ENCODE measurements at regions of chr7 and their contacts with region 1.

Region 1: DNA sequence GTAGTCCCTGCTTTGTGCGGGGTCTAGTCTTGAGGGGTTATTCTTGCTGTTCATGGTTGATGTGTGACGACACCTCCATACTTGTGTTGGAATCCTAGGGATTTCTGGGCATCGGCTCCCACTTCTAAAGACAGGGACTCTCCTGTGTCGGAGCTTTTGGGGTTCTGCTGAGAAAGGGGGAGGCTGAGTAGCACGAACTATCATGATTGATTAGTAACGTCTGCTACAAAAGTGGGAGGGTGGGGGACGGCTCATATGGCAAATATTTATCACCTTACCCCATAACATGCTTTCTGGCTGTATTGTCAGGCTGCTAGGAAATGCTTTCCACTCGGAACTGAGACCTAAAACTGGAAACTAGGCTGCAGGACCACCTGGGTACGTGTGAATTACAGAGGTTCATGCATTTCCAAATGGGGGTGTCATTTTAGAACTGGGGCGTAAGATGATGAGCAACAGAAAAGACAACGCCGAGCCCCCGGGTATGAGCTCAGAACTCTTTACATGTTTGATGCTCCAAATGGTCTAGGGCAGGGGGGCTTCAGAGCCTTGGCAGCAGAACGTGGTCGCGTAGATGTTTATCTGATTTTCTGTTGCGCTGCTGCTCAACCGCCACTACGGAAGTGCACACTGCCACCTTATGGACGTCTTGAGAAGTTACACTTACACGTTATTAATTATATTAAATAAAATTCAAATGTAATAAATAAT is 15.1 kb upstream of the NME8 start:
- DNase-seq: peak; percentile 80
- H3K4me3 ChIP-seq: peak overlapping the region in 6 of 8 donors; percentile 18 to 65 (median 28)
- H3K27ac ChIP-seq: peak overlapping the region in 1 of 8 donors; percentile 38
- H3K4me1 ChIP-seq: peaks cover 0 to 28% (median 21%) of the 10 kb centered on the region in 6 donors
- H3K27me3 ChIP-seq: no peaks in the 10 kb centered on the region
- CTCF ChIP-seq: peak; percentile 9 to 72 (median 57)
- POLR2A ChIP-seq: no peak

Region 2: GRCh38 chr7:37208528-37208927 is 624.7 kb before region 1 on chr7:
- intact Hi-C with region 1: loop called (anchors 2 kb)
- DNase-seq: no peak
- H3K4me3 ChIP-seq: no peak overlapping the region
- H3K27ac ChIP-seq: peak overlapping the region in 7 of 8 donors; percentile 2 to 67 (median 56)
- H3K4me1 ChIP-seq: peaks cover 6 to 50% (median 31%) of the 10 kb centered on the region in 6 donors
- H3K27me3 ChIP-seq: no peaks in the 10 kb centered on the region
- CTCF ChIP-seq: peak in 5 of 11 experiments; percentile 43 to 68 (median 50)
- POLR2A ChIP-seq: no peak

Region 3: GRCh38 chr7:37633048-37633447 is 200.2 kb before region 1 on chr7:
- intact Hi-C with region 1: loop called (anchors 10 kb)
- DNase-seq: no peak
- H3K4me3 ChIP-seq: no peak overlapping the region
- H3K27ac ChIP-seq: no peak overlapping the region
- H3K4me1 ChIP-seq: no peaks in the 10 kb centered on the region
- H3K27me3 ChIP-seq: no peaks in the 10 kb centered on the region
- CTCF ChIP-seq: no peak
- POLR2A ChIP-seq: no peak

Region 4: GRCh38 chr7:38273282-38273992 is 440.2 kb after region 1 on chr7 and contains the start of gene TARP:
- intact Hi-C with region 1: no loop called
- DNase-seq: no peak
- H3K4me3 ChIP-seq: peak within 1 kb of the TSS in 1 of 8 donors; percentile 35
- H3K27ac ChIP-seq: peak within 1 kb of the TSS in 6 of 8 donors; percentile 13 to 65 (median 42)
- H3K4me1 ChIP-seq: peaks cover 0 to 16% (median 0%) of the 10 kb centered on the region in 6 donors
- H3K27me3 ChIP-seq: no peaks in the 10 kb centered on the region
- CTCF ChIP-seq: no peak
- POLR2A ChIP-seq: no peak